ENCODE measurements at regions of chr19 and their contacts with region 1.

Region 1: GRCh38 chr19:17470068-17470841 is at the start of gene SLC27A1:
- DNase-seq: peak; percentile 88
- H3K4me3 Mint-ChIP-seq: peak within 1 kb of the TSS; percentile 91
- H3K27ac Mint-ChIP-seq: peak within 1 kb of the TSS; percentile 75
- H3K4me1 Mint-ChIP-seq: peaks cover 34% of the 10 kb centered on the region
- H3K27me3 Mint-ChIP-seq: peaks cover 10% of the 10 kb centered on the region
- total RNA-seq, gene SLC27A1: 3.6 to 4.1 TPM

Region 2: GRCh38 chr19:17370026-17370587 is 100.1 kb before region 1 on chr19:
- CTCF ChIA-PET with region 1: no interaction called
- POLR2A ChIA-PET with region 1: no interaction called
- DNase-seq: no peak
- H3K4me3 Mint-ChIP-seq: no peak overlapping the region
- H3K27ac Mint-ChIP-seq: no peak overlapping the region
- H3K4me1 Mint-ChIP-seq: peaks cover 3% of the 10 kb centered on the region
- H3K27me3 Mint-ChIP-seq: peaks cover 9% of the 10 kb centered on the region

Region 3: DNA sequence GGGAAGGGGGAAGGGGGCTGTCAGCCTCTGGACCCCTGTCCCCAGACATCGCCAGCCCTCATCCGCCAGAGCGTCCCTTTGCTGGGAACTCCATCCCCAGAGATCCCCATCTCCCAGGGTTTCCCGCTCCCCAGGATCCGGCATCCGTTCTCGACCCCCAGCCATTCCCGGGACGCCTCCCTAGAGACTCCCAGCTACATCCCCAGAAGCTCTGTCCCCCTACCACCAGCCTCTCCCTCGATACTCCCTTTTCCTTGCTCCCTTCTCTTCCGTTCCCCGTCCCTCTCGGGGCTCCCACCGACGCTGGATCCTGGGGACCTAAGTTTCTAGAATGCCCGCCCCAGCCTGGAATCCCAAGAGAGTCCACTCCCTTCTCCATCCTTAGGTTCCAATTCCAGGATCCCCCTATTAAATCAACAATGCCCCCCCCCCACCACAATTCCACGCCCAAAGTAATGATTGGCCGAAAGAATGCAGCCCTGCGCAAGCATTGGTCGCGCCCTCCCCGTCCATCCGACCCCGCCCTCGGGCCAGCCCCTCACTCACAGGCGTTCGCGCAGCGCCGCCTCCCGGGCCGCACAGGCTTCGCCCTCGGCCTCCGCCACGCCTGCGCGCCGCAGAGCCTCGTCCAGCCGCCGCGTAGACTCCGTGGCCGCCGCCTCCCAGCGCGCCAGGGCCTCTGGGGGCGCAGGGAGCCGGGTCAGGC is 79.4 kb before region 1 on chr19:
- CTCF ChIA-PET with region 1: interaction called, 14 read pairs
- POLR2A ChIA-PET with region 1: interaction called, 4 read pairs
- DNase-seq: peak; percentile 86
- H3K4me3 Mint-ChIP-seq: peak overlapping the region; percentile 76
- H3K27ac Mint-ChIP-seq: no peak overlapping the region
- H3K4me1 Mint-ChIP-seq: peaks cover 27% of the 10 kb centered on the region
- H3K27me3 Mint-ChIP-seq: peaks cover 27% of the 10 kb centered on the region

Region 4: DNA sequence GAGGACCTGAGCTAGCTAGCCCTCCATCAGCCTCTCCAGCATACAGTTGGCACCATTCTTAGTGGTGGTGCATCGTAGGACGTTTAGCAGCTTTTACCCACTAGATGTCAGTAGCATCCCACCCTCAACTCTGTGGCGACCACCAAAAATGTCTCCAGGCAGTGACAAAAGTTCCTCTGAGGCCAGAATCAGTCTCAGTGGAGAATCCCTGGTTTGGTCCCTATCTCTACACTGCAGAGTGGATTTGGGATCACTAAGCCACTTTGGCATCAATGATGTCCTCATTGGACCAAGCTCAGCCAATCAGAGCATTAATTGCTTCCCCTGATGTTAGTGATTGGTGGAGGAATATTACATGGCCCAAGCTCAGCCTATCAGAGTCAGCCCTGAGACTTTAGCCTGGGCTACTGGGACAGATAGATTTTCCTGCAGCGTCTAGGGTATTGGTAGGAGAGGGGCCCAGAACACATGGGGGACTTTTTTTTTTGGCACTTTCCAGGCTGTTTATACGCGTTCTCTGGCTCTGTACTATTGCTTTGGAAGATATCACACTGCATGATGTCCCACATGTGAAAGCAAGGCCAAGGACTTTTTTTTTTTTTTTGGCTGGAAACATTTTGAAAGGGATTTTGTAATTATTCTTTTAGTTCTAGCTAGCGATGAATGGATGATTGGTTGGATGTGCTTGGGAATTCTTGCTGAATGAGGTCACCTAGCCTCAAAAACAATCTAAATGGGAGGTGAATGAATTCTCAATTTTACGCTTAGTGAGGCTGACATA is 28.8 kb before region 1 on chr19:
- CTCF ChIA-PET with region 1: interaction called, 13 read pairs
- POLR2A ChIA-PET with region 1: no interaction called
- DNase-seq: no peak
- H3K4me3 Mint-ChIP-seq: no peak overlapping the region
- H3K27ac Mint-ChIP-seq: no peak overlapping the region
- H3K4me1 Mint-ChIP-seq: no peaks in the 10 kb centered on the region
- H3K27me3 Mint-ChIP-seq: no peaks in the 10 kb centered on the region